Right ventricle myocardium inferior (tissue), 1 donor: ENCODE measurements at regions of chr11 and their contacts with region 1.

Region 1: GRCh38 chr11:65888163-65888814 is at the start of gene FIBP:
- DNase-seq: peak; percentile 99
- ATAC-seq: peak; percentile 88
- total RNA-seq, gene FIBP: 44.7 TPM

Region 2: DNA sequence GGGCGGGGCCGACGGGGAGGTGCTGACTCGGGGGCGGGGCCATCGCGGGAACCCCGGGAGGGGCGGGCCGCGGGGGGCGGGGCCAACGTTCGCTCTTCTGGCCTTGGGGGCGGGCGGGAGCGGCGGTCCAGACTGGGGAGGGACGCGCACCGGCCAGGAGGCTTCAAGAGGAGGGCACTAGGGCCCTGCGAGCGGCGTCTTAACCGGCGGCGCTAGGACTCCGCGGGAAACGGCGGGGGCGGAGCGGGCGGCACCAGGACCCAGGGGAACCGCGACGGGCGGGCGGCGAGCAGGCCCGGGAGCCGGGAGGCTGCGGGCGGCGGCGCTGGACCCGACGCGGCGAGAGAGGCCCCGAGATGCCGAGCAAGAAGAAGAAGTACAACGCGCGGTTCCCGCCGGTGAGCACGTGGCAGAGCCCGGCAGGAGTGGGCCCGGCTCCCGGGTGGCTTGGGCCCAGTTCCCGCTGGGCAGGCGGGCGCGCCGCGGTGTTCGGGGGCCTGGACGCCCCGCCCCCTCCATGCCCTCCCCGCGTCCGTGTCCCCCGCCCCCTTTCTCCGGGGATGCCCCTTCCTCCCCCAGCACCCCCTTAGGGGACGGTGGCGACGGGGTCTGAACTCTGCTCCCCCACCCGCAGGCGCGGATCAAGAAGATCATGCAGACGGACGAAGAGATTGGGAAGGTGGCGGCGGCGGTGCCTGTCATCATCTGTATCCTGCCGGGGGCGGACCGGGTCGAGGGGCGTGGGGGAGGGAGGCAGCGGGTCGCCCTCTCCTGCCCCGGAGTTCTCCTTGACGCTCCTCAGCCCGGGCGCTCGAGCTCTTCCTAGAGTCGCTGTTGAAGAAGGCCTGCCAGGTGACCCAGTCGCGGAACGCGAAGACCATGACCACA is 31.1 kb after region 1 on chr11 and contains the start of gene DRAP1:
- intact Hi-C with region 1: loop called (anchors 1 kb)
- DNase-seq: peak; percentile 100
- ATAC-seq: peak; percentile 96
- total RNA-seq, gene DRAP1: 110 TPM